ENCODE measurements at regions of chr7 and their contacts with region 1.

Region 1: DNA sequence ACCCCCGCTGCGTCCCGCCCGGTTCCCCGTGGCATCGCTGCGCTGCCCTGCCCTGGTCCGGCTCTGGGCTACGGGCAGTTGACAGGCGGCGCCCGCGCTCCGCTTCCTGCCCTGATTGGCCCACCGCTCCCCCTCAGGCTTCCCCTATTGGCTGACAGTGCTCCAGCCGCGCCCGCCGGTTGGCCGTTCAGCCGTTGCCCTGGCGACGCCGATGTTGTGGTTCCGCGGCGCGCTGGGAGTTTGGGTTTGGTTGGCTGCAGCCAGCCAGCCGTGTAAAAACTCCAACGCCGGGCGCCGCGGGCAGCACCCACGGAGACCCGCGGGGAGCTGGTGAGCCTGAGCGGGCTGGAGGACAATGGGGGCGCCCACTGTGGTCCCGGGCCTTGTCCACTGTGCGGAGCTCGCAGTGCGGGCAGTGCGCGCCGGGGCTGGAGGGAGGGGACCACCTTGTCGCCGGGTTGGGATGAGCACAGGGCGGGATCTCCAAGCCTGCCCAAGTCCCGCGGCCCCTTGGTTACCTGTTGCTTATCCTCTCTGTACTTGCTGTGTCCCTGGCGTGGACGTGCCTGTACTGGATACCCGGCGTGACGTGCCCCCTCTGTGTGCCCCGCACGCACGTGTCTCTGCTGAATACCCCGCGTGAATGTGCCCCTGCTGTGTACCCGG is at the start of gene C7orf57:
- DNase-seq: peak; percentile 96
- ATAC-seq: peak; percentile 100
- total RNA-seq, gene C7orf57: 0.12 TPM in 1 of 2 donors, not detected in the other

Region 2: GRCh38 chr7:48088559-48089045 is 53.2 kb after region 1 on chr7:
- intact Hi-C with region 1: loop called in 1 of 2 experiments (anchors 5 kb)
- DNase-seq: peak; percentile 93
- ATAC-seq: peak; percentile 46 to 73

Region 3: DNA sequence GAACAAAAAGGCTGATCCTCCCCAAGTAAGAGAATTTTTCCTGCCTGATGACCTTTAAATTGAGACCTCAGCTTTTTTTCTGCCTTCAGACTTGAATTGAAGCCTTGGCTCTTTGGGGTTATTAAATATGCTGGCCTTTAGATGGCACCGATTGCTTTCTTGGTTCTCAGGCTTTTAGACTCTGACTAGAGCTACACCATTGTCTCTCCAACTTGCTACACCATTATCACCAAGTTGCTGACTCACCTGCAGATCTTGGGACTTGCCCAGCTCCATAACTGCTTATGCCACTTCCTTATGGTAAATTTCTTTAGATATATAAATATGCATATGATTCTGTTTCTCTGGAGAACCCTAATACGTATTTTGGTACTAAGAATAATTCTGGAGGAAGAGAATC is 132.7 kb after region 1 on chr7:
- intact Hi-C with region 1: no loop called
- DNase-seq: no peak
- ATAC-seq: no peak